Activated T-helper 1 cell treated with anti-CD3 and anti-CD28 coated beads, Interleukin-12 subunit alpha, Interleukin-12 subunit beta, Interleukin-2, Interleukin-4 antibody, amounts not matched to agents 30 ng/mL and 10 ng/mL and 1 ng/mL, durations not matched to agents 14 hours and 24 hours and 36 hours (primary cell): ENCODE measurements at regions of chr5 and their contacts with region 1.

Region 1: GRCh38 chr5:87368601-87369000 is 44.1 kb downstream of the CCNH start:
- DNase-seq: no peak
- H3K4me3 Mint-ChIP-seq: no peak overlapping the region
- H3K27ac Mint-ChIP-seq: no peak overlapping the region
- H3K4me1 Mint-ChIP-seq: peaks cover 8% of the 10 kb centered on the region
- H3K27me3 Mint-ChIP-seq: no peaks in the 10 kb centered on the region

Region 2: DNA sequence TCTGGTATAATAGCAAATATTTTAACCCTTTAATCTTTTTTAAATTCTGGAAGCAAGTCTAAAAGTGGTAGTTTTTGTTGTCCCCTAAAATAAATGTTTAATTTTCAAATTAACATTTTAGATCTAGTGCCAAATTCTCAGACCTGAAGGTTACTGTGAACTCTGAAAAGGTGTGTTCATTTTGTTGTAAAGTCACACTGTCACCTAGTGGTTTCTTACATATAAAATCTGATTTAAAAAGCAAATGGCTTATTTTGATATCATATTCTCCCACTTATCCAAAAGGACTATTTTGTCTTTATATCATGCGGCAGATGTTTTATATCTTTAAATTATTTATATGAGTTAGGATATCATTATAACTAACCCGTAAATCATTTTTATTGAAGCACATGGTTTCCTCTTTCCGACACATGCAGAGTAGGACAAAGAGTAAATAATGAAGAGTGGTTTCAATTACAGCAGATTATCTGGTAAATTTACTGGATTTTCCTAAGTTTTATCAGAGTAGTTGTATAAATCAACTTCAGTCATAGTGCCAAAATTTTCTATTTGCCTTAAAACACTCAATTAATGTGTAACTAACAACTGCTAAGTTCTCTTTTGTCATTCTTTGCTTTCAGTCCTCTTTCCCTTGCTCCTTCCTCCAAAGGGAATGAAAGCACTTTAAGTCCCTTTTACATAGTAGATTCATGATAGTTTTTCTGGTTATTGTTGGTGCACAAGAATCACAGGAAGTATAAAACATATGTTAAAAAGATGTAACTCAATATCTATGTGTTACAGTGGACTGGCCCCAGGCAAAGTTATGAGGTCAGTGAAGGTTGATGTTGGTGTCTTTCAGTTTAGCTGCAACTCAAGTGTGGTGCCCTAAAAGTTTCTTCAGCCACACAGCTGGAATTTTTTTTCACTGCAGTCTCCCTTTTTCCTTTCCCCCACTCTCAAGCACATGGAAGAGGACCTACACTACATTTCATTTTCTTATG is 561.3 kb before region 1 on chr5:
- intact Hi-C with region 1: no loop called
- DNase-seq: no peak
- H3K4me3 Mint-ChIP-seq: no peak overlapping the region
- H3K27ac Mint-ChIP-seq: no peak overlapping the region
- H3K4me1 Mint-ChIP-seq: no peaks in the 10 kb centered on the region
- H3K27me3 Mint-ChIP-seq: no peaks in the 10 kb centered on the region

Region 3: GRCh38 chr5:87231037-87231819 is 137.4 kb before region 1 on chr5:
- intact Hi-C with region 1: no loop called
- DNase-seq: no peak
- H3K4me3 Mint-ChIP-seq: no peak overlapping the region
- H3K27ac Mint-ChIP-seq: no peak overlapping the region
- H3K4me1 Mint-ChIP-seq: peaks cover 5% of the 10 kb centered on the region
- H3K27me3 Mint-ChIP-seq: peaks cover 3% of the 10 kb centered on the region

Region 4: GRCh38 chr5:87327998-87328397 is 40.6 kb before region 1 on chr5:
- intact Hi-C with region 1: loop called (anchors 5 kb)
- DNase-seq: no peak
- H3K4me3 Mint-ChIP-seq: no peak overlapping the region
- H3K27ac Mint-ChIP-seq: no peak overlapping the region
- H3K4me1 Mint-ChIP-seq: peaks cover 30% of the 10 kb centered on the region
- H3K27me3 Mint-ChIP-seq: no peaks in the 10 kb centered on the region